ENCODE measurements at regions of chr19 and their contacts with region 1.

Region 1: GRCh38 chr19:11380653-11381534 is 3.2 kb downstream of the EPOR start:
- DNase-seq: peak; percentile 98
- H3K4me3 Mint-ChIP-seq: peak overlapping the region; percentile 81
- H3K27ac Mint-ChIP-seq: peak overlapping the region; percentile 90
- H3K4me1 Mint-ChIP-seq: peaks cover 40% of the 10 kb centered on the region
- H3K27me3 Mint-ChIP-seq: peaks cover 10% of the 10 kb centered on the region

Region 2: DNA sequence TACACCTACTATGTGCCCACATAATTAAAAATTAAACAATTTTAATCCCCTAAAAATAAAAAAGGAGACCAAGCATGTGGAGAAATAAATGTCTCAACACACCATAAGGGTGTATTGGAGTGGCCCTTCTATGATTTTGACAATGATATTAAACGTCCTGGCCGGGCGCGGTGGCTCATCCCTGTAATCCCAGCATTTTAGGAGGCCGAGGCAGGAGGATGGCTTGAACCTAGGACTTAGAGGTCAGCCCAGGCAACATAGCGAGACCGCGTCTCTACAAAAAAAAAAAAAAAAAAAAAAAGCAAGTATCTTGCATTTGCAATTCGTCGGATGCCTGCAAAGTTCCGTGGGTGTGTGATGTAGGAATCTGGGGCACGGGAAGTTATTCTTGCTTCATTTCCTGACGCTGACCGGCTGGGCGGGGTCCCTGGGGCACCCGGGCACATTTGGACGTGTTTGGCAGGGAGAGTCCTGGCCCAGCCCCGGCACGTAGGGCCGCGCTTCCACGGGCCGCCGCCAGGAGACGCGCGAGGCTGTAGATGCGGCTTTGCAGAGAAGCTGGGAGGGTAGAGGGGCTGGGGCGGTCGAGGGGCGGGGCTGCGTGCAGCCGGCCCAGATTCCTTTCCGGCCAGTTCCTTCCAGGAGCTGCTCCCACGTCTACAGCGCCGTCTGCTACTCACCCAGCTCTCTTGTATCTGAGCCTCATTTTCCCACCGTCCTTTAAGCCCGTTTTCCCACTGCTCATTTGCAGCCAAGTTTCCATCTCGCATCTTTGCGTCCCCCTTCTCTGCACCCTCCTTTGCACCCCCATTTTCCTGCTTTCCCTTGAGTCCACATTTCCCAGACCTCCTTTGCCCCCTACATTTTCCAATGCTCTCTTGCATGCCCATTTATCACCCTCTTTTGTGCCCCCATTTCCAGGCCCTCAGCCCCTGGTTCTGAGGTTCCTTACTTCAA is 87.2 kb before region 1 on chr19:
- CTCF ChIA-PET with region 1: interaction called, 10 read pairs
- POLR2A ChIA-PET with region 1: no interaction called
- intact Hi-C with region 1: no loop called
- DNase-seq: peak; percentile 90
- H3K4me3 Mint-ChIP-seq: peak overlapping the region; percentile 43
- H3K27ac Mint-ChIP-seq: no peak overlapping the region
- H3K4me1 Mint-ChIP-seq: peaks cover 10% of the 10 kb centered on the region
- H3K27me3 Mint-ChIP-seq: peaks cover 13% of the 10 kb centered on the region

Region 3: DNA sequence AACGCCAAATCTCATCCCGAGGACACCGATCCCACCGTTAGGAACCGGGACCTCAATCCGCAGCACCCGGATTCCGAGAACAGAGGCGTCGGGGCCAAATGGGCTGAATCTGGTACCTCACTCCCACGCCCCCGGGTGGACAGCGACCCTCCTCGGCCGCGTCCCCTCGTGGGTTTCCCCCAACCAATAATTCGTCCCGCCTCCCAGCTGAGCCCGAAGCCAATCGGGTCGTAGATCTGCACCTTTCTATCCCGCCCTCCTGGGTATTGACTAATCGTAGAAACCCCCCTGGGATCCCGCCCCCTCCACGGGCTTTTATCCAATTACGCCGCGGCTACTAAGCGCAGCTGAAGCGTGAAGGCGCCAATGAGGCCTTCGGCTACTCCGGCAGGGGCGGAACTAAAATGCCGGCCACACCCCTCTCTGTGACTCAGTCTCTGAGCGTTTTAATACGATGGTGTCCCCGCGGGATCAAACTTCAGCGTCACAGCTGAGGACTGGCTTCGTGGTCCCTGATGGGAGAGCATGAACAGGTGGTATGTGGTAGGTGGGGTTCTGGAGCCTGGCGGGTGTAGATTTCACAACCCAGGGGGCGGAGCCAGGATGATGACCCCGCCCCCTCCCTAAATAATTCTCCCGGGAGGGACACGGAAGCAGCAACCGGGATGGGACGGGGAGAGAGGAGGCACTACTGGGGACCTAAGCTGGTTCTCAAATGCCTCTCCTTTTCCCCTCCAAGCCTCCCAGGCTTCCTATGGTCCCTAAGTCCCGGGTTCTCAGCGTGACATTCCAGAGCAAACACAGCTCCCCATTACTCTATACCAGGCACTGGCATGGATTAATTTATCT is 34.6 kb before region 1 on chr19 and contains the starts of genes CCDC159 and TMEM205:
- CTCF ChIA-PET with region 1: interaction called, 15 read pairs
- POLR2A ChIA-PET with region 1: interaction called, 10 read pairs
- intact Hi-C with region 1: no loop called
- DNase-seq: peak; percentile 100
- H3K4me3 Mint-ChIP-seq: peak within 1 kb of the TSS; percentile 80
- H3K27ac Mint-ChIP-seq: peak within 1 kb of the TSS; percentile 85
- H3K4me1 Mint-ChIP-seq: peaks cover 25% of the 10 kb centered on the region
- H3K27me3 Mint-ChIP-seq: no peaks in the 10 kb centered on the region
- total RNA-seq, gene CCDC159: 16.0 to 18.0 TPM
- total RNA-seq, gene TMEM205: 31.1 to 33.2 TPM

Region 4: DNA sequence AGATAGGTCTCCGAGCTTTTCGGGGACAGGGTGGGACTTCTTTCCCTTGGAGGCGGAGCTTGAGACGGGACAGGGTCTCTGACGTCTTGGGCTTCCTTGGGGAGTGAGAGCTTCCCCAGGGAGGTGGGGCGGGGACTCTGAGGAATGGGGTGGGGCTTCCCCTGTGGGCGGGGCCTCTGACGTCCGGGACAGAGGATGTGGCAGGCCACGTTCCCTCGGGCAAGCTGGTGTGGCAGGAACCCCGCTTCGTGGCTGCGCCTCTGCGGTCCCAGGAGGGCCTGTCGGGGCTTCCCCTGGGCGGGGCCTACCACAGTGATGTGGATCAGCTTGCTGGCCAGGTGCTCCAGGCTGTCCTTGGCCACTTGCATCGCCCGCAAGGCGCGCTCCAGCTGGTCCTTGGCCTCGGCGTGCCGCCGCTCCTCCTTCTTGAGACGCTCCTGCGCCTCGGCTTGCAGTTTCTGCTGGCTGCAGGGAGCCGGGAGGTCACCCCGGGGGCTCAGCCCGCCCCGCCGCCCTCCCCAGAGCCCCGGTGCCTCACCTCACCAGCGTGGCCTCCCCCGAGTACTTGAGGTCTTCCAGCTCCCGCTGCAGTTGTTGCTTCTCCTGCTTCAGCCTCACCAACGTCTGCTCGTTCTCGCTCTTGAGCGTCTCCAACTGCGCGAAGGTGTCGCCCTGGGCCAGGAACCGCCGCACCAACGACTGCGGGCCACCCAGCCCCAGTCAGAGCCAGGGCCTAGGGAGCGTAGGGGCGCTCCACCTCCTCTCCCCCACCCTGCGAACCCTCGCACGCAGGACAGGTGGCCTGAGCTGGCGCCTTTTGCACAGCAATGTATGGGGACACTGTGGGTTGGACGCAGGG is 41.5 kb after region 1 on chr19:
- CTCF ChIA-PET with region 1: interaction called, 20 read pairs
- POLR2A ChIA-PET with region 1: no interaction called
- intact Hi-C with region 1: no loop called
- DNase-seq: peak; percentile 87
- H3K4me3 Mint-ChIP-seq: peak overlapping the region; percentile 62
- H3K27ac Mint-ChIP-seq: no peak overlapping the region
- H3K4me1 Mint-ChIP-seq: peaks cover 39% of the 10 kb centered on the region
- H3K27me3 Mint-ChIP-seq: peaks cover 46% of the 10 kb centered on the region

Region 5: DNA sequence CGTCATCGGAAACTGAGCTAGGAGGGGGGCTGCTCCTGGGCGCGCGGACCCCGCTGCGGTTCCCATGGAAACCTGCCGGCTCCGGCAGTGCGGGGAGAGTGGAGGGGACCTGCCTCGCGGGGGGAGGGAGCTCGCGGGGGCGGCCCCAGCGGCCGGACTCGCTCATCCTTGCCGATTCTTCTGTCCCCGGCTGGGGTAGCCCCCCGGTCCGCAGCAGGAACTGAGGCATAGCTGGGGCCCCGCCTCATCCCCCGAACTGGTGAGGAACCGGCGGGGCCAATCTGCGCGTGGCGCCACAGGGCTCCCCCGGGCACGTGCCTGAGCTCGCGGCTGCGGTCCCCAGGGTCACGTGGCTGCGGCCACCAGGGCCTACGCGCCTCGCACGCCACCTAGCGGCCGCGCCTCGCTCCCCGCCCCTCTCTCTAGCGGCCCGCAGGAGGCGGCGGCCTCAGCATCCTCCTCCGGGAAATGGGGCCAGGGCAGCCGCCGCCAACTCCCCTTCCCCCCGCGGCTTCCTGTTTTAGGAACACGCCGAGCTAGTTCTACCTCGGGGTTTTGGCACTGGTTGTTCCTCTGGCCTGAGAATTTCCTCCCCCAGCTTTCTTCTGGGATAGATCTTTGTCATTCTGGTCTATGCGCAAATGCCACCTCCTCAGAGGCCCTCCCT is 101.6 kb after region 1 on chr19:
- CTCF ChIA-PET with region 1: interaction called, 36 read pairs
- POLR2A ChIA-PET with region 1: interaction called, 10 read pairs
- intact Hi-C with region 1: loop called (anchors 2 kb)
- DNase-seq: peak; percentile 91
- H3K4me3 Mint-ChIP-seq: peak overlapping the region; percentile 70
- H3K27ac Mint-ChIP-seq: peak overlapping the region; percentile 52
- H3K4me1 Mint-ChIP-seq: peaks cover 19% of the 10 kb centered on the region
- H3K27me3 Mint-ChIP-seq: peaks cover 17% of the 10 kb centered on the region